Pancreas (tissue), 10 donors: ENCODE measurements at regions of chr7 and their contacts with region 1.

Region 1: DNA sequence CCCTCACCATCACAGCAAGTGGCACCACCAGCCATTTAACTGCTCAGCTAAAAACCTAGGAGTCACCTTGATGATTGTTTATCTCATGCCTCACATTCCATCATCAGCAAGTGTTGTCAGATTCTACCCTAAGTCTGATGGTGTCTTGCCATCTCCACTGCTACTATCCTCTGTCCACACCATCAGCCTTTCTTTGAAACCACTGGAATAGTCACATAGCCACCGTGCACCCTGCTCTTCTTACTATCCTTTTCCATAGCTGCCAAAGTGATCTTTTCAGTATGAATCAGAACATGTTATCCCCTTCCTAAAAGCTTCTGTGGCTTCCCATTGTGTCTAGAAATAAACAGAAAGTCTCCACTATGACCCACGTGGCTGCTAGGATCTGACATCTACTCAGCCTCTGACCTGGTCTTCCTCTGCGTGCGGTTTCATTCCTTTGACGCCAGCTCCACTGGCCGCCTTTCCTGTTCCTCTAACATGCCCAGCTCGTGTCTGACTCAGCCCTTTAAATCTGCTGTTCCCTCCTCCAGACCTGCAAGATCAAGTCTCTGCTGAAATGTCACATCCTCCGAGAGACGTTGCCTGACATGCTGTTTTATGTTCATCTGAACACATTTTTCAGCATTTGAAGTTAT is 16.5 kb upstream of the CHN2 start:
- DNase-seq: peak in 1 of 6 donors; percentile 60
- ATAC-seq: peak in 3 of 4 donors; percentile 38 to 83 (median 80)
- H3K4me3 ChIP-seq: no peak overlapping the region
- H3K27ac ChIP-seq: no peak overlapping the region
- H3K4me1 ChIP-seq: no peaks in the 10 kb centered on the region
- H3K27me3 ChIP-seq: no peaks in the 10 kb centered on the region
- CTCF ChIP-seq: no peak

Region 2: GRCh38 chr7:29397398-29397797 is 219.3 kb after region 1 on chr7:
- intact Hi-C with region 1: loop called in 1 of 3 experiments (anchors 10 kb)
- DNase-seq: no peak
- ATAC-seq: peak; percentile 24 to 70 (median 52)
- H3K4me3 ChIP-seq: no peak overlapping the region
- H3K27ac ChIP-seq: no peak overlapping the region
- H3K4me1 ChIP-seq: peaks cover 0 to 8% (median 6%) of the 10 kb centered on the region in 3 donors
- H3K27me3 ChIP-seq: no peaks in the 10 kb centered on the region
- CTCF ChIP-seq: no peak